CD4-positive, alpha-beta T cell (primary cell): ENCODE measurements at regions of chr12 and their contacts with region 1.

Region 1: GRCh38 chr12:92570056-92570753 is 132.6 kb upstream of the PLEKHG7 start:
- DNase-seq: peak in 9 of 14 experiments; percentile 20 to 83 (median 33)
- ATAC-seq: peak; percentile 95
- H3K4me3 ChIP-seq: no peak overlapping the region
- H3K4me3 Mint-ChIP-seq: no peak overlapping the region
- H3K27ac ChIP-seq: no peak overlapping the region
- H3K27ac Mint-ChIP-seq: no peak overlapping the region
- H3K4me1 ChIP-seq: no peaks in the 10 kb centered on the region
- H3K4me1 Mint-ChIP-seq: no peaks in the 10 kb centered on the region
- H3K27me3 ChIP-seq: no peaks in the 10 kb centered on the region
- H3K27me3 Mint-ChIP-seq: no peaks in the 10 kb centered on the region
- CTCF ChIP-seq: peak; percentile 96

Region 2: DNA sequence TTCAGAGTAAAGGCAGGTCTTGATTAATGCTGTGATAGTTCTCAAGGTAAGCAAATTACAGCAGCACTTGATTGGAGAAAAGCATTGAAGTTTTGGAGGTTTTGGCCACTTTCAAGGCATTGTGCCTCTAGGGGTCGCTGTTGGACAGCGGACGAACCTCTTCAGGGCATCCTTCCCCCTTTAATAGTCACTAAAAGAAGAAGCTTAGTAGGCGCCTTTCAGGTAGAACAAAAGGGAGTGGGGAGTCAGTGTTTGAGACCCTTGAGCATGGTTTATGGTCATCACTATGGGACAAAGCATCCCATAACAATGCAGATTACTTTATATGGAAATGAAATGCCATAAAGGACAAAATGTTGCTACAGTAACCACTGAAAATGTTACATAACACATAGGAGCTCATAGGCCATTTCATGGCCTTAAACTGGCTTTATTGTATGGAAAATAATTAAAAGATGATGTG is 1188.1 kb before region 1 on chr12:
- CTCF ChIA-PET with region 1: interaction called, 41 read pairs
- POLR2A ChIA-PET with region 1: interaction called, 18 read pairs
- intact Hi-C with region 1: loop called (anchors 1 kb)
- DNase-seq: peak; percentile 77 to 94 (median 86)
- ATAC-seq: peak; percentile 89
- H3K4me3 ChIP-seq: peak overlapping the region; percentile 21
- H3K4me3 Mint-ChIP-seq: peak overlapping the region; percentile 81
- H3K27ac ChIP-seq: no peak overlapping the region
- H3K27ac Mint-ChIP-seq: peak overlapping the region; percentile 1
- H3K4me1 ChIP-seq: peaks cover 7% of the 10 kb centered on the region
- H3K4me1 Mint-ChIP-seq: peaks cover 5% of the 10 kb centered on the region
- H3K27me3 ChIP-seq: peaks cover 0 to 5% of the 10 kb centered on the region in 2 experiments
- H3K27me3 Mint-ChIP-seq: peaks cover 4% of the 10 kb centered on the region
- CTCF ChIP-seq: peak; percentile 90

Region 3: DNA sequence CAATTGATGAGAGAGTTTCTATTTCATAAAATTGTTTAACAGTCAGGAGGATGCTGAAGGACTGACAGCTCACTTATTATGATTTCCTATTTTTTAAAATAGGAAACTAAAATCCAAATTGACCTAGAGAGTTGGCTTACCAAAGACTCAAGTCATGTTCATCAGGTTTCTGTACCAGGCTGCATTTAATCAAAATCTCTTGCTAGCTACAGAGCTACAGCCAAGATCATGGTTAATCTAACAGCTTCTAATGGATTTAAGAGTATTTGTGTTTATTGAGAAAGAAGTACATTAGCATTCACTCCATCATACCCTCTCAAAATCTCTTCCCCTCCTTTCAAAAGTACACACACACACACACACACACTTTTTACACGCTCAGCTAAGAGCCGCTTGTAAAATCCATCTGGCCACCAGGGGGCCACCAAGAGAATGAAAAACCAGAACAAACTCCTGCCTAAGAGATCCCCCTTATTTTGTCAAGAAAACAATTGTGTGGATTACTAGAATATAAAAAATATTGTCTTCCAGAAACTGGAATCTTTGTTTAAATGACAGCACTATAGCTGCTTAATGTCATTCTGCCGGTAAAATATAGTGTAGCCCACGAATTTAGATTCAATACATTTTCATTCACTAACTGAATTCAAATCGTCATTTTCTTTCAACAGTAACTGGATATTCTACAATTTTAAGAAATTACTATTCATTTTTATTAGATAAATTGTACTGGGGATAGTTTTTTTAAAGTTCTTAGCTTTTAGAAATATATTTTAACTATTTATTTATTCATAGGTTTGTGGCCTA is 758.5 kb before region 1 on chr12:
- CTCF ChIA-PET with region 1: interaction called, 5 read pairs
- POLR2A ChIA-PET with region 1: interaction called, 3 read pairs
- intact Hi-C with region 1: loop called in 1 of 2 experiments (anchors 2 kb)
- DNase-seq: peak; percentile 58 to 90 (median 78)
- ATAC-seq: peak; percentile 86
- H3K4me3 ChIP-seq: no peak overlapping the region
- H3K4me3 Mint-ChIP-seq: no peak overlapping the region
- H3K27ac ChIP-seq: no peak overlapping the region
- H3K27ac Mint-ChIP-seq: peak overlapping the region; percentile 64
- H3K4me1 ChIP-seq: peaks cover 2% of the 10 kb centered on the region
- H3K4me1 Mint-ChIP-seq: peaks cover 26% of the 10 kb centered on the region
- H3K27me3 ChIP-seq: no peaks in the 10 kb centered on the region
- H3K27me3 Mint-ChIP-seq: no peaks in the 10 kb centered on the region
- CTCF ChIP-seq: peak; percentile 87

Region 4: GRCh38 chr12:92170050-92170449 is 400.2 kb before region 1 on chr12:
- CTCF ChIA-PET with region 1: no interaction called
- POLR2A ChIA-PET with region 1: no interaction called
- intact Hi-C with region 1: no loop called
- DNase-seq: no peak
- ATAC-seq: no peak
- H3K4me3 ChIP-seq: no peak overlapping the region
- H3K4me3 Mint-ChIP-seq: no peak overlapping the region
- H3K27ac ChIP-seq: no peak overlapping the region
- H3K27ac Mint-ChIP-seq: no peak overlapping the region
- H3K4me1 ChIP-seq: peaks cover 5% of the 10 kb centered on the region
- H3K4me1 Mint-ChIP-seq: peaks cover 29% of the 10 kb centered on the region
- H3K27me3 ChIP-seq: no peaks in the 10 kb centered on the region
- H3K27me3 Mint-ChIP-seq: no peaks in the 10 kb centered on the region
- CTCF ChIP-seq: no peak

Region 5: DNA sequence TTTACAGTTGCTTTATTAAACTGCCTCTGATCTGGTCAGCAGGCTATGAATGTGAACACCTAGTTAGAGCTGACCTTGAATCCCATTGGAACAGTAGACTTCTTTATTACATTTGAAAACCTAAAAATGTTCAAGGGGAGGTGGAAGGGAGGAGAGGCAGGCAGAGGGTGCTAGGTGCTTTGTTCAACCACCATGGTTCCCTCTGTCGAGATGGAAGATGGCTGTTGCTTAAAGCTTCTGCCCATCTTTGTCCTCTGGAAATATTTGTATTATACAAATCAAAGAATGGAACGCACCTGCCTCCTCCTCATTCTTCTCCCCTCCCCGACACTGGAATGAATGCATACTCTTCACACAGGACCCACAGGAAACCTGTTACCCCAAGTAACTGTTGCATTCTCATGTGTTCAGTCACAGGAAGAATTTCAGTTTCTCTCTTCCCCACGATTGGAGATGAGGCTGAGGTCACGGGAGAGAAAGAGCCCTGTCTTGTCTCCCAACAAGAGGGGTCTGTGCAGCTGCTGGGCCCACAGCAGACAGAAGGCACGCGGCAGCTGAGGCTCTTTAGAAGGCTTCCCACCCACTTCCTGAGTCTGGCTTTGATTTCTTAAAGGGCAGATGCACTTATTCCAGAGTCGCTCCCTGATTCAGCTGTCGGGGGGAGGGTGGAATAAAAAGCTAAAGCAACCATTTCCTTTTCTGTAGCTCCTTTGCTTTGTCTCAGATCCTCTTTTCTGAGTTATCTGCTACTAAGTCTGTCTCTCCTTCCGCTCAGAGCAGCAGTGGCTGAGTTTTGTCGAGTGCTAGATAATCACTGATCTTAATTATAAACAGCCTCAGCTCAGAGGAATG is 206.7 kb before region 1 on chr12:
- CTCF ChIA-PET with region 1: interaction called, 5 read pairs
- POLR2A ChIA-PET with region 1: interaction called, 4 read pairs
- intact Hi-C with region 1: loop called in 1 of 2 experiments (anchors 5 kb)
- DNase-seq: peak; percentile 20 to 79 (median 51)
- ATAC-seq: peak; percentile 55
- H3K4me3 ChIP-seq: peak overlapping the region; percentile 43
- H3K4me3 Mint-ChIP-seq: peak overlapping the region; percentile 74
- H3K27ac ChIP-seq: peak overlapping the region; percentile 73 to 79
- H3K27ac Mint-ChIP-seq: peak overlapping the region; percentile 90
- H3K4me1 ChIP-seq: peaks cover 29% of the 10 kb centered on the region
- H3K4me1 Mint-ChIP-seq: peaks cover 76% of the 10 kb centered on the region
- H3K27me3 ChIP-seq: no peaks in the 10 kb centered on the region
- H3K27me3 Mint-ChIP-seq: no peaks in the 10 kb centered on the region
- CTCF ChIP-seq: no peak

Region 6: GRCh38 chr12:92485351-92486348 is 84.6 kb before region 1 on chr12:
- CTCF ChIA-PET with region 1: no interaction called
- POLR2A ChIA-PET with region 1: no interaction called
- intact Hi-C with region 1: no loop called
- DNase-seq: no peak
- ATAC-seq: no peak
- H3K4me3 ChIP-seq: no peak overlapping the region
- H3K4me3 Mint-ChIP-seq: no peak overlapping the region
- H3K27ac ChIP-seq: no peak overlapping the region
- H3K27ac Mint-ChIP-seq: peak overlapping the region; percentile 24
- H3K4me1 ChIP-seq: no peaks in the 10 kb centered on the region
- H3K4me1 Mint-ChIP-seq: peaks cover 19% of the 10 kb centered on the region
- H3K27me3 ChIP-seq: no peaks in the 10 kb centered on the region
- H3K27me3 Mint-ChIP-seq: no peaks in the 10 kb centered on the region
- CTCF ChIP-seq: no peak

Region 7: DNA sequence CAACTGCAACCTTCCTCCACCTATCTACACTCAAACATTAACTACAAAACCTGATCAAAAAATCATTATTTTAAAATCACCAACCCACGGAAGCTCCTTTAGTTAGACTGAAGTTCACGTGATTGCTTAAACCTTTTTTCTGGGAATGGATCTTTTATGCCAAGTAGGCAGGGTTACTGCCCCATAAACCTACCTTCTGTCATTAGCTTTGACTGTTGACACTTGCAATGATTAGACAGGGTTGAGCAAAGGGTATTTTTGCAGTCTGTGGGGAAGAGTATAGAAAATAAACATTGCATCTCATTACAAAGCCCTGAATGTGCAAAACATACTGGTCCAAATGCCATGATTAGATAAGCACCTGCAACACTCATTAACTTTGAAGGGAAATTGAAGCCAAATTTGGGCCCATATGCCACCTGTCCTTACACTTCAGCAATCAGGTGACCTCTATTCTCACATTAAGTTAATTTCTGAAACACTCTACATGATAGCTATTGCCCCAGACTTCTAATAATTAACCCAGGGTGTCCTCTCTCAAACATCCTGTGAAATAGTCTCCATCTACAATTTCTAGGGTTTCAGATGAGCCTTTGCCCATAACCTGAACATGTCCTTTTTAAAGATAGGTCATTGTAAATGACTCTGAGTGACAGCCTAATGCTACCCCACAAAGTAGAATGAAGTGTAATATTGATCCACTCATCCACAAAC is 23.4 kb before region 1 on chr12:
- CTCF ChIA-PET with region 1: no interaction called
- POLR2A ChIA-PET with region 1: no interaction called
- intact Hi-C with region 1: no loop called
- DNase-seq: no peak
- ATAC-seq: no peak
- H3K4me3 ChIP-seq: no peak overlapping the region
- H3K4me3 Mint-ChIP-seq: no peak overlapping the region
- H3K27ac ChIP-seq: no peak overlapping the region
- H3K27ac Mint-ChIP-seq: no peak overlapping the region
- H3K4me1 ChIP-seq: peaks cover 7% of the 10 kb centered on the region
- H3K4me1 Mint-ChIP-seq: peaks cover 6% of the 10 kb centered on the region
- H3K27me3 ChIP-seq: no peaks in the 10 kb centered on the region
- H3K27me3 Mint-ChIP-seq: no peaks in the 10 kb centered on the region
- CTCF ChIP-seq: no peak

Region 8: DNA sequence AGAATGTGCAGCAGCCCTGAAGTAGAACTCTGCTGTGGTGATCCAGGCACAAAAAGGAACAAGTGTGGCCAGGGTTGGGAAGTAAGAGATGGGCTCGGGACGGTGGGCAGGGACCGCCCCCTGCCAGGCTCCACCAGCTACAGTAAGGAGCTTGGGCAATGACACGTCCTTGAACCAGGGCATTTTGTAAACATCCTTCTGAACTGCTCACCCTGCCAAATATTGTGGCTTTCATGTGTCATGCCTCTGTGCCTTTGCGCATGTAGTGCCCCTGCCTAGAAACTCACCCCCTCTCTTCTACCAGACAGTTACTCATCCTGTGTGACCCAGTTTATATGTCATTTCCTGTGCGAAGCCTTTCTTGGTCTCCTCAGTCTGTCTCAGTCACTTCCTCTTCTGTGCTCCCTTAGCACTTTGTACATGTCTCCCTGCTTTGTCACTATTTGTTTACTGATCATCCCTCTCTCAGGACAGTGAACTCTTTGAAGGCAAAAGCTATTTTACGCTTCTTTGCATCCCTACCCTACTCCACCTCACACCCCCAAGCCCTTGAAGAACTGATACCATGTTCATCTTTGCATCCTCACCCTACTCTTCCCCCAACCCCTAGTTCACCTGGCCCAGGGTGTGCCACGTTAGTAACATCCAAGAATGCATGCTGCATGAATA is 23.7 kb after region 1 on chr12:
- CTCF ChIA-PET with region 1: interaction called, 5 read pairs
- POLR2A ChIA-PET with region 1: interaction called, 3 read pairs
- intact Hi-C with region 1: loop called in 1 of 2 experiments (anchors 1 kb)
- DNase-seq: peak; percentile 59 to 98 (median 72)
- ATAC-seq: peak; percentile 84
- H3K4me3 ChIP-seq: no peak overlapping the region
- H3K4me3 Mint-ChIP-seq: peak overlapping the region; percentile 28
- H3K27ac ChIP-seq: peak overlapping the region; percentile 96 to 97
- H3K27ac Mint-ChIP-seq: peak overlapping the region; percentile 91
- H3K4me1 ChIP-seq: peaks cover 31% of the 10 kb centered on the region
- H3K4me1 Mint-ChIP-seq: peaks cover 43% of the 10 kb centered on the region
- H3K27me3 ChIP-seq: no peaks in the 10 kb centered on the region
- H3K27me3 Mint-ChIP-seq: no peaks in the 10 kb centered on the region
- CTCF ChIP-seq: no peak

Region 9: GRCh38 chr12:92729773-92730305 is 159.6 kb after region 1 on chr12:
- CTCF ChIA-PET with region 1: no interaction called
- POLR2A ChIA-PET with region 1: no interaction called
- intact Hi-C with region 1: no loop called
- DNase-seq: no peak
- ATAC-seq: no peak
- H3K4me3 ChIP-seq: no peak overlapping the region
- H3K4me3 Mint-ChIP-seq: no peak overlapping the region
- H3K27ac ChIP-seq: no peak overlapping the region
- H3K27ac Mint-ChIP-seq: no peak overlapping the region
- H3K4me1 ChIP-seq: no peaks in the 10 kb centered on the region
- H3K4me1 Mint-ChIP-seq: no peaks in the 10 kb centered on the region
- H3K27me3 ChIP-seq: peaks cover 0 to 5% of the 10 kb centered on the region in 2 experiments
- H3K27me3 Mint-ChIP-seq: no peaks in the 10 kb centered on the region
- CTCF ChIP-seq: no peak